WTC11 (cell line): ENCODE measurements at regions of chr12 and their contacts with region 1.

Region 1: DNA sequence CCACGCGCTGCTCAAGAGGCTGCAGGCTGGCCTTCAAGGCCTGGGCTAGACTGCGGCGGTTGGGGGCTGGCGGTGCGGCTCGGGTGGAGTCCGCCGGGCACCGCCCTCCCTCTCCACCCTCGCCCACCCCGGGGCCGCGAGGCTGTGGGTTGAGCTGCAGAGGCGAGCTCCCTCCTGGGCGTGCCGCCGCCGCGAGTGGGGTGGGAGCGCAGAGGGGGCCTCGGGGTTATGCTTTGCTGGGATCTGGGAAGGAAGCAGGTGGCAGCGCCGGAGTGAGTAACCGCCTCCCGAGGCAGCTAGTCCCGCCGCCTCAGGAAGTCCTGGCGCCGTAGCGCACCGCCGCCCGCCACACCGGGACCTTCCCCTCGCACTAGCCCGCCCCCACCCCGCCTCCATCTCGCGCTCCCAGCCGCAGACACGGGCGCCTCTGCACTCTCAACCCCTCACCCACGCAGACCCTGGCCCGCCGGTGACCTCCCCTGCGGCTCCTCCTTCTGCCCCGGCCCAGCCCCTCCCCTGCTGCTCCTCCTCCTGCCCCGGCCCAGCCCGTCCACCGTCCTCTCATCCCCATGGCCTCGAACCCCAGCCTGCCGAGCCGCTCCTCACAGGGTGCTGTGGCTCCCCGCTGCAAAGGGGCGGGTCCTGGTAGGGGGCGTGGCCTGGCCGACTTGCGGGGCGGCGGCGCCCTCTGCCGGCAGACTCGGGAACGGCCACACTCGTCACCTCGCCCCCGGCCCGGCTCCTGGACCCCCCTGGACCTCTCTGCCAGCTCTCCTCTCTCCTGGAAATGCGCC is 16.6 kb downstream of the TAMALIN start:
- DNase-seq: peak; percentile 92
- ATAC-seq: peak; percentile 38
- H3K4me3 Mint-ChIP-seq: peak overlapping the region; percentile 70
- H3K27ac Mint-ChIP-seq: no peak overlapping the region
- H3K4me1 Mint-ChIP-seq: peaks cover 35% of the 10 kb centered on the region
- H3K27me3 Mint-ChIP-seq: peaks cover 46% of the 10 kb centered on the region
- CTCF ChIP-seq: peak; percentile 96

Region 2: GRCh38 chr12:51886021-51886322 is 137.4 kb before region 1 on chr12:
- CTCF ChIA-PET with region 1: interaction called, 12 read pairs
- POLR2A ChIA-PET with region 1: no interaction called
- DNase-seq: no peak
- ATAC-seq: no peak
- H3K4me3 Mint-ChIP-seq: no peak overlapping the region
- H3K27ac Mint-ChIP-seq: no peak overlapping the region
- H3K4me1 Mint-ChIP-seq: peaks cover 25% of the 10 kb centered on the region
- H3K27me3 Mint-ChIP-seq: peaks cover 16% of the 10 kb centered on the region
- CTCF ChIP-seq: no peak

Region 3: GRCh38 chr12:51905471-51906429 is 117.6 kb before region 1 on chr12:
- CTCF ChIA-PET with region 1: interaction called, 15 read pairs
- POLR2A ChIA-PET with region 1: no interaction called
- DNase-seq: no peak
- ATAC-seq: no peak
- H3K4me3 Mint-ChIP-seq: peak overlapping the region; percentile 66
- H3K27ac Mint-ChIP-seq: no peak overlapping the region
- H3K4me1 Mint-ChIP-seq: peaks cover 10% of the 10 kb centered on the region
- H3K27me3 Mint-ChIP-seq: peaks cover 53% of the 10 kb centered on the region
- CTCF ChIP-seq: no peak

Region 4: GRCh38 chr12:51970904-51971646 is 52.3 kb before region 1 on chr12:
- CTCF ChIA-PET with region 1: interaction called, 48 read pairs
- POLR2A ChIA-PET with region 1: no interaction called
- DNase-seq: peak; percentile 63
- ATAC-seq: peak; percentile 95
- H3K4me3 Mint-ChIP-seq: no peak overlapping the region
- H3K27ac Mint-ChIP-seq: peak overlapping the region; percentile 52; the same call in 1 of the 2 replicates
- H3K4me1 Mint-ChIP-seq: peaks cover 32% of the 10 kb centered on the region
- H3K27me3 Mint-ChIP-seq: no peaks in the 10 kb centered on the region
- CTCF ChIP-seq: peak; percentile 82

Region 5: GRCh38 chr12:52050761-52051541 is 27.6 kb after region 1 on chr12 and contains the start of gene NR4A1:
- CTCF ChIA-PET with region 1: interaction called, 57 read pairs
- POLR2A ChIA-PET with region 1: interaction called, 8 read pairs
- DNase-seq: peak; percentile 90
- ATAC-seq: peak; percentile 68
- H3K4me3 Mint-ChIP-seq: peak within 1 kb of the TSS; percentile 86
- H3K27ac Mint-ChIP-seq: peak within 1 kb of the TSS; percentile 87
- H3K4me1 Mint-ChIP-seq: peaks cover 28% of the 10 kb centered on the region
- H3K27me3 Mint-ChIP-seq: peaks cover 50% of the 10 kb centered on the region
- CTCF ChIP-seq: no peak
- total RNA-seq, gene NR4A1: 19.2 to 26.9 TPM (median 22.0 TPM) in 3 replicates

Region 6: GRCh38 chr12:52069327-52070184 is 46.2 kb after region 1 on chr12 and contains the start of gene ATG101:
- CTCF ChIA-PET with region 1: interaction called, 165 read pairs
- POLR2A ChIA-PET with region 1: interaction called, 7 read pairs
- DNase-seq: peak; percentile 91
- ATAC-seq: peak; percentile 98
- H3K4me3 Mint-ChIP-seq: peak within 1 kb of the TSS; percentile 97
- H3K27ac Mint-ChIP-seq: peak within 1 kb of the TSS; percentile 99
- H3K4me1 Mint-ChIP-seq: peaks cover 14% of the 10 kb centered on the region
- H3K27me3 Mint-ChIP-seq: peaks cover 9% of the 10 kb centered on the region
- CTCF ChIP-seq: no peak
- total RNA-seq, gene ATG101: 43.3 to 52.1 TPM (median 45.0 TPM) in 3 replicates

Region 7: GRCh38 chr12:52091869-52092268 is 68.5 kb after region 1 on chr12:
- CTCF ChIA-PET with region 1: interaction called, 388 read pairs
- POLR2A ChIA-PET with region 1: no interaction called
- DNase-seq: no peak
- ATAC-seq: no peak
- H3K4me3 Mint-ChIP-seq: no peak overlapping the region
- H3K27ac Mint-ChIP-seq: no peak overlapping the region
- H3K4me1 Mint-ChIP-seq: peaks cover 14% of the 10 kb centered on the region
- H3K27me3 Mint-ChIP-seq: no peaks in the 10 kb centered on the region
- CTCF ChIP-seq: no peak